ENCODE measurements at regions of chr14 and their contacts with region 1.

Region 1: DNA sequence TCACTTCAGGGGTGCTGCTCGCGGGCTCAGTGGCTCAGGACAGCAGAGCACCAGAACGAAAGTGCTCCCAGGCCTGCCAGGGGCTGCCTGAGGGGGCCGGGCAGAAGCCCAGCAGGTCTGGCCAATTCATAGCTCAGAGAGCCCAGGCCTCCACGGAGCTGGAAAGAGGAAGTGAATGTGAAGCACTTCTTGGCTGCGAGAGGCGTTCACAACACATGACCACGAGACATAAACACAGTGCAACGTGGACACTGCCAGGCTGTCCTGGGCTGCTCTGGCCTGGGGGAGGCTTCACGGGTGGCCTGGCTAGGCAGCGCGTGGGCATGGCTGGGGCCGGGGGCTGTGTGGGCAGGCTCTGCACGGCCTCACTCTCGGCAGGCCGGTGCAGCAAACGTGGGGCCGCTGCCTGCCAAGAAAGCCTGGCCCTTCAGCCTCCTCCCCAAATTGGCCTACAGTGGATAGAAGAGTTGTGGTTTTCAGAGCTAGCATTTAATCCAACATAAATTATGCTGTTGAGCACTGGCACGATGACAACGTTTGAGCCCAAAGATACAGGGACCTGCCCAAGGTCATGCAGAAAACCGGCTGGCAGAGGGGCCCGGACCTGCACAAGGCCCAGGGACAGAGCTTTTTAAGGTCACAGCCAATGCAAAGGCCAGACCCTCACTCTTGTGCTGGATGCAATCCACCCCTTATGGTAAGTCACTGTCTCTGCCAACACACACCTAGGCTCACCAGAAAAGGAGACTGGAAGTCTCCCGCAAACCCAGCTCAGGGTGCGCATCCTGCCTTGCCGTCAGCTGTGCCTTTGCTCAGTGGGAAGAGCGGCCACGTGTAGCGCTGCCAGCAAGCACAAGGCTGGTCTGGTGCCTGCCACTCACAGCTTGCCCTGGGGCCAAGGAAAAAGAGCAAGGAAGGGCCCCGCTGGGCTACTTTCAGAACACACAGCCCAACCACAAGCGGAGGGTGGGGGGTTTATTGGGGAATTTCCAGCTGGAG is 8.6 kb downstream of the SLC25A29 start:
- DNase-seq: peak; percentile 28
- H3K4me3 ChIP-seq: no peak overlapping the region
- H3K27ac ChIP-seq: no peak overlapping the region
- H3K4me1 ChIP-seq: no peaks in the 10 kb centered on the region
- H3K27me3 ChIP-seq: no peaks in the 10 kb centered on the region
- CTCF ChIP-seq: no peak
- POLR2A ChIP-seq: no peak

Region 2: GRCh38 chr14:99946652-99947489 is 350.7 kb before region 1 on chr14:
- CTCF ChIA-PET with region 1: no interaction called
- POLR2A ChIA-PET with region 1: no interaction called
- dilution Hi-C with region 1: no loop called
- intact Hi-C with region 1: no loop called
- DNase-seq: peak; percentile 26
- H3K4me3 ChIP-seq: no peak overlapping the region
- H3K27ac ChIP-seq: no peak overlapping the region
- H3K4me1 ChIP-seq: no peaks in the 10 kb centered on the region
- H3K27me3 ChIP-seq: no peaks in the 10 kb centered on the region
- CTCF ChIP-seq: peak; percentile 87 to 94
- POLR2A ChIP-seq: no peak

Region 3: GRCh38 chr14:100285021-100285912 is 12.3 kb before region 1 on chr14:
- CTCF ChIA-PET with region 1: interaction called, 28 read pairs
- POLR2A ChIA-PET with region 1: no interaction called
- dilution Hi-C with region 1: no loop called
- intact Hi-C with region 1: no loop called
- DNase-seq: peak; percentile 60
- H3K4me3 ChIP-seq: peak overlapping the region; percentile 27 to 88 (median 45)
- H3K27ac ChIP-seq: peak overlapping the region; percentile 67
- H3K4me1 ChIP-seq: peaks cover 2% of the 10 kb centered on the region
- H3K27me3 ChIP-seq: no peaks in the 10 kb centered on the region
- CTCF ChIP-seq: peak; percentile 60 to 93
- POLR2A ChIP-seq: peak; percentile 10

Measured in endothelial cell of umbilical vein (primary cell).